ENCODE measurements at regions of chr7 and their contacts with region 1.

Region 1: GRCh38 chr7:107168233-107169119 is at the start of gene HBP1:
- DNase-seq: peak; percentile 97
- H3K4me3 Mint-ChIP-seq: peak within 1 kb of the TSS; percentile 88
- H3K27ac Mint-ChIP-seq: peak within 1 kb of the TSS; percentile 97
- H3K4me1 Mint-ChIP-seq: peaks cover 26% of the 10 kb centered on the region
- H3K27me3 Mint-ChIP-seq: peaks cover 10% of the 10 kb centered on the region
- total RNA-seq, gene HBP1: 15.2 and 16.6 TPM in 2 replicates

Region 2: GRCh38 chr7:105298439-105298907 is 1870.0 kb before region 1 on chr7:
- intact Hi-C with region 1: loop called (anchors 10 kb)
- DNase-seq: no peak
- H3K4me3 Mint-ChIP-seq: peak overlapping the region; percentile 19
- H3K27ac Mint-ChIP-seq: peak overlapping the region; percentile 82
- H3K4me1 Mint-ChIP-seq: peaks cover 53% of the 10 kb centered on the region
- H3K27me3 Mint-ChIP-seq: no peaks in the 10 kb centered on the region

Region 3: GRCh38 chr7:106346678-106347217 is 821.7 kb before region 1 on chr7:
- intact Hi-C with region 1: loop called (anchors 1 kb)
- DNase-seq: peak; percentile 76
- H3K4me3 Mint-ChIP-seq: peak overlapping the region; percentile 63
- H3K27ac Mint-ChIP-seq: peak overlapping the region; percentile 99
- H3K4me1 Mint-ChIP-seq: peaks cover 53% of the 10 kb centered on the region
- H3K27me3 Mint-ChIP-seq: peaks cover 1% of the 10 kb centered on the region

Region 4: DNA sequence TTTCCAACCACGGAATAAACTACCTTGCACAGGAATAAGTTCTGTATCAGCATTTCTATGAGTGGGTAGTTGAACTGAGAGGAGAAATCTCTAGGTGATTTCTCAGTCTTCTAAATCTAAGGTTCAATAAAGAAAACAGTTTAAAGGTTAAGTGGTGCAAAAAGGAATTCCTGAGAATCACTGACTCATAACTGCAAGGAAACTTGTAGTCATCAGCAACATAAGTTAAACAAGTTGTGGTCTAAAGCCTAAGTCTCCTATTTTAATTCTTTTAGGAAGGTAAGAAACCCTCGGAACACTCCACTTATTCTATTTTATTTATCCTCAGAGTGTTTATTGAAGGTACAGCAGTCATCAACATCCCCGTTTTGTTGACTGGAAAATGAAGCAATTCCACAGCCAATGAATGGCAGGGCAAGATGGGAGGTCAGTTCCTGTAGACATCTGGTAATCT is 395.8 kb before region 1 on chr7:
- intact Hi-C with region 1: loop called (anchors 1 kb)
- DNase-seq: no peak
- H3K4me3 Mint-ChIP-seq: peak overlapping the region; percentile 47
- H3K27ac Mint-ChIP-seq: peak overlapping the region; percentile 98
- H3K4me1 Mint-ChIP-seq: peaks cover 63% of the 10 kb centered on the region
- H3K27me3 Mint-ChIP-seq: no peaks in the 10 kb centered on the region

Region 5: GRCh38 chr7:107044347-107045194 is 123.9 kb before region 1 on chr7 and contains the start of gene PRKAR2B:
- intact Hi-C with region 1: loop called (anchors 5 kb)
- DNase-seq: peak; percentile 67
- H3K4me3 Mint-ChIP-seq: peak within 1 kb of the TSS; percentile 88
- H3K27ac Mint-ChIP-seq: peak within 1 kb of the TSS; percentile 53
- H3K4me1 Mint-ChIP-seq: peaks cover 13% of the 10 kb centered on the region
- H3K27me3 Mint-ChIP-seq: peaks cover 43% of the 10 kb centered on the region
- total RNA-seq, gene PRKAR2B: 0.42 and 1.0 TPM in 2 replicates

Region 6: DNA sequence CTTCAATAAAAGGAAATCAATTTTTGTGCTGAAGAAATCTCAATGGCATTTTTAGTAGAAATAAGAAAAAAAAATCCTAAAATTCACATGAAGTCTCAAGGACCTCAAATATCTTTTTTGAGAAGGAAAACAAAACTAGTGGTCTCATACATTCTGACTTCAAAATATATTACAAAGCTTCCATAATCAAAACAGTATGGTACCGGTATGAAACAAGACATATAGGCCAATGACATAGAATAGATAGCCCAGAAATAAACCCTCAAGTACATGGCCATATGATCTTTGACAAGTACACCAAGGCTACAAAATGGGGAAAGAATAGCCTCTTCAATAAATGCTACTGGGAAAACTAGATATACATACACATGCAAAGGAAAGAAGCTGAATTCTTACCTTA is 169.6 kb after region 1 on chr7:
- intact Hi-C with region 1: no loop called
- DNase-seq: no peak
- H3K4me3 Mint-ChIP-seq: no peak overlapping the region
- H3K27ac Mint-ChIP-seq: no peak overlapping the region
- H3K4me1 Mint-ChIP-seq: peaks cover 3% of the 10 kb centered on the region
- H3K27me3 Mint-ChIP-seq: no peaks in the 10 kb centered on the region

Region 7: DNA sequence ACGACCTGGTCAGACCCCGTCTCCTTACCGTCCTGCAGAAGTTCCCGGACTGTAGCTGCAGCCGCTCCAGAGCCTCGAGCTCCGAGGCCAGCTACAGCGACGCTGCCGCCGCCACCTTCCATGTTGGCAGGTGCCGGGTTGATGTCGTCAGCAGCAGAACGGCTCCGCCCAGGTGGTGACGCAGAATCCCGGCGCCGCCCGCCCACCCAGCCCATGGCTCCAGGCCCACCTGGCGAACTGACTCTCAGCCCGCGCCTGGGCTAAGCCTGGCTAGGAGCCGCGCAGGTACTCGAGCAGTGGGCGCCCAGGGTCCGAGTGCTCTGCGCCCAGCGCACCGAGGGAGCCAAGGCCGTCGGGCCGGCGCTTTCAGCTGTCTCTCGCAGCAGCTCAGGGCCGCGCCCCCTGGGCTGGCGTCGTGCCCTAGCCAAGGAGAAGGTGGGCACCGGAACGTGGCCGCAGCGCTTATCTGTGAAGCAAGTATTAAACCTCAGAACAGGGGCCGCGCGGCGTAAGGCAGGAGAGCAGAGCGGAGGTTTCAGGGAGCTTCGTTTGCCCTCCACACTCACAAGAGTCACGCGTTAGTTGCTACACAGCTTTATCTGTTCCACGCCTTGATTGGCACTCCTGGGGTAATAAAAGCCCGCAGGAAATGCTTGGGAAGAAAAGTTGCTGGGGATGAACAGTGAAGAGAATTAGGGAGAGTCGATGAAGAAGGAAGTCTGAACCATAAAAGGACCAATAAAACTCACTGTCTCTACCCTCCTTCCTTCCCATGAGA is 395.5 kb after region 1 on chr7 and contains the starts of genes COG5 and DUS4L:
- intact Hi-C with region 1: loop called (anchors 2 kb)
- DNase-seq: peak; percentile 75
- H3K4me3 Mint-ChIP-seq: peak within 1 kb of the TSS; percentile 89
- H3K27ac Mint-ChIP-seq: peak within 1 kb of the TSS; percentile 93
- H3K4me1 Mint-ChIP-seq: peaks cover 62% of the 10 kb centered on the region
- H3K27me3 Mint-ChIP-seq: no peaks in the 10 kb centered on the region
- total RNA-seq, gene COG5: 36.5 and 39.1 TPM in 2 replicates
- total RNA-seq, gene DUS4L: 11.8 and 13.5 TPM in 2 replicates

Region 8: DNA sequence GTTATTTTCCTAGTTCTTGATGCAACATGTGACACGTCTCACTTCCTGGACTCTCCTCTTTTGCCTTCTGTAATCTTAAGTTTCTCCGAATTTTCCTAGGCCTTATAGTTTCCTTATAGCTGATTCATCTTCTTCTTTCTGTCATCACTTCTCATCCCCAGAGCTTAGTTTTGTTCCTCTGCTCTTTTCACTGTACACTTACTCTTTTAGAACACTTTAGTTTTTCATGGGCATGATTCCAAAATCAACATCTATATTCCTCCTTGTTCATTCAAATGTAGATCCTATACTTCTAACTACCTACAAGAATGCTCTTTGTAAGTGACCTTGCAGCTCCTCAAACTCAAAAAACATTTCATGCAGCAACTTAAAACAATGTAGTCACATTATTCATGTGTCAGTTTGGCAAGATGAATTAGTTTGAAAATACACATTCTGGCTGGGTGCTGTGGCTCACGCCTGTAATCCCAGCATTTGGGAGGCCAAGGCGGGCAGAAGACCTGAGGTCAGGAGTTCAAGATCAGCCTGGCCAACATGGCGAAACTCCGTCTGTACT is 647.6 kb after region 1 on chr7:
- intact Hi-C with region 1: loop called (anchors 1 kb)
- DNase-seq: no peak
- H3K4me3 Mint-ChIP-seq: peak overlapping the region; percentile 19
- H3K27ac Mint-ChIP-seq: peak overlapping the region; percentile 72
- H3K4me1 Mint-ChIP-seq: peaks cover 25% of the 10 kb centered on the region
- H3K27me3 Mint-ChIP-seq: no peaks in the 10 kb centered on the region

Region 9: DNA sequence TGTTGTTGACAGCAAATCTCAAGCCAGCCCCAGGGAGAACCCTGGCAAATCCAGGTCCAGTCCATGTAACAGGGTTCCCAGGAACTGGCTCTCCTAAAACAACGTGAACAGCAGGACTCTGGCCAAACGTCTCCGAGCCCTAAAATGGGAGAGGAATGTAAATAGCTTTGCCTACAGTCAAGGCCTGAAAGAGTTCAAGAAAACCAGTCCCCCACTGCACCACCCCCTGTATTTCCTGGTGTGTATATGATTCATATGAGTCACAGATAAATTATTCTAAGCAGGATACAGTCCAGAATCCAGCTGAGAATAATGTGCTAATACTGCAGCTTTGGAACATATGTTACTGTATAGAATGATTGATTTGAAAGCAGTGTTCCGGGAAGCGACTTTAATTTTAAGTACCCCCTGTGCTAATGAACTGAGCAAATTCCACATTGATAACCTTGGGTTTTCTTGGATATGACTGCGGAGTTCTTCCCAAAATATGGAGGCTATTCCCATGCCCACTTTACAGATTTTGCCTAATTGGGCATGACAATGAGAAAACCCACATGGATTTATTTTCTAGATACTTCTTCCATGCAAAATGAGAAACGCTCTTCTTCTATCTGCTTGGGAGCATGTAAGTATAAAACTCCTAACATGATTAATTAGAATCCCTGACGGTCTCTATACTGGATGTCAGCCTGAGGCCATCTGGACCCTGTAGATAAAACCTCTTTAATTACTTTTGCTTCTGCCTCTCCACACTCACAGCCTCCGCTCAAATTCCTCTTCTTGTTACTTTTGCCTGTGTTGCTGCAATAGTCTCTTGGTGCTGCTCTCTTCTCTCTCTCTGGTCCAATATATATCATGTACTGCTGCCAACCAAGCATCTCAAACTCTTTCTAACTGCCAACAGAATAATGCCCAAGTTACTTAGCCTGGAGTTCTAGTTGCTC is 911.4 kb after region 1 on chr7:
- intact Hi-C with region 1: no loop called
- DNase-seq: no peak
- H3K4me3 Mint-ChIP-seq: no peak overlapping the region
- H3K27ac Mint-ChIP-seq: no peak overlapping the region
- H3K4me1 Mint-ChIP-seq: no peaks in the 10 kb centered on the region
- H3K27me3 Mint-ChIP-seq: peaks cover 4% of the 10 kb centered on the region

Measured in activated T-helper 1 cell treated with anti-CD3 and anti-CD28 coated beads, Interleukin-12 subunit alpha, Interleukin-12 subunit beta, Interleukin-2, Interleukin-4 antibody, amounts not matched to agents 30 ng/mL and 10 ng/mL and 1 ng/mL, durations not matched to agents 14 hours and 24 hours and 36 hours (primary cell).